IMR-90 (cell line): ENCODE measurements at regions of chr10 and their contacts with region 1.

Region 1: DNA sequence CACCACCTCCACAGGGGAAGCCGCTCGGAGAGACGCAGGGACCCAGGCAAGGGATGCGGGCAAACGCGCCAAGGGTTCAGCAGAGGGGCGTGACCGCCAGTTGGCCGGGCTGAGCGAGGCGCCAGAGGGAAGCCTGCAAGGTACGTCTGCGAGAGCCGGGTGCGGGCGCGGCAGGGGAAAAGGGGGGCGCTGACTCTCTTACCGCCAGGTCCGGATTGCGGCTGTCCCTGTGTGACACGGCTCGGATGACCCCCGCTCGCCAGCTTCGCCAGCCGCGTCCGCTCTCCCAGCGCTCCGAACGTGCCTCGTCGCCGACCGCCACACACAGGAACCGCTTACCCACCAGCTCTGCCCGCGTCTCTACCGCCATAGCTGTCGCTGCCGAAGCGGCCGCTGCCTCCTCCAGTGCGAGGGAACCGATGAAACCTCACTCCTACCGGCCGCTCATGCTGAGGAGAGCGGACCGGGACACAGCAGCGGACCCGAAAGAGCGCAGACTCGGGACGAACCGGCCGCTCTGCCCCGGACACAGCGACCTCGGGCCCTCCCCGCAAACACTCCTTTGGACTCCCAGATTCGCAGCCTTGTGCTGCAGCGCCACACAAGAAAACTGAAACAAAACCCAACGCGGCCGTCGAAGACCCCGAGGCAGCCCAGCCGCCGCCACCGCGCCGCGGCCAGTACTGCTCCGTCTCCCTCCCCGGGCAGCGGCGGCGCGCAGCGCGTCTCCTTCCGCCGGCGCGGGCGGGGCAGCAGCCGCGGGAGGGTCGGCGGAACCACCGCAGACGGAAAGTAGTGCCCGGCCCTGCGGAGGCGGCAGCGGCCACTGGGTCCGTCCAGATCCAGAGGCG is at the start of gene JMJD1C:
- DNase-seq: peak; percentile 84
- ATAC-seq: peak; percentile 84
- H3K4me3 ChIP-seq: peak within 1 kb of the TSS; percentile 90
- H3K27ac ChIP-seq: peak within 1 kb of the TSS; percentile 90
- H3K4me1 ChIP-seq: peaks cover 4% of the 10 kb centered on the region; the same call in 1 of the 2 replicates
- H3K27me3 ChIP-seq: no peaks in the 10 kb centered on the region
- CTCF ChIP-seq: no peak
- POLR2A ChIP-seq: peak; percentile 89
- RAD21 ChIP-seq: peak; percentile 30
- total RNA-seq, gene JMJD1C: 96.8 and 108 TPM in 2 replicates

Region 2: DNA sequence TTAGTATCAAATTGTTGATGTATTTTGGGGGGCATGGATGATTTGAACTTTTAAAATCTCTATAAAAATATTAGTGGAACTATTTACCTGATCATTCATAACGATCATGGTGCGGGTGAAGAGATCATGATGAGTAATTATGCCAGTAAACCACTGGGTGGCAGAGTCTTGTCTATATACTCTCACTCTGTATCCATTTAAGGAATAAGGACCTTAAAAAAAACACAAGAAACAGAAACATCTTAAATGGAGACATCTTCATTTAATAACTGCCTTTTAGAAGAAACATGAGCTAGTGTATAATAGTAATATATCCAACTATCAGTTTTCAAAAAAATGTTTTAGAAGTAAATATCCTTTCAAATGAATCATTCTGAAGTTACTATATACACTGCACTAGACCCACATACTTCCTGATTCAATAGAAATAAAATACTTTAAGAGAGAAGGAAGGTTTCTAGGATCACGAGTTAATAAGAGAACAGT is 248.4 kb before region 1 on chr10:
- CTCF ChIA-PET with region 1: no interaction called
- POLR2A ChIA-PET with region 1: no interaction called
- dilution Hi-C with region 1: no loop called
- in situ Hi-C with region 1: no loop called
- intact Hi-C with region 1: loop called (anchors 5 kb)
- DNase-seq: peak; percentile 77
- ATAC-seq: peak; percentile 95
- H3K4me3 ChIP-seq: no peak overlapping the region
- H3K27ac ChIP-seq: no peak overlapping the region
- H3K4me1 ChIP-seq: no peaks in the 10 kb centered on the region
- H3K27me3 ChIP-seq: no peaks in the 10 kb centered on the region
- CTCF ChIP-seq: peak; percentile 66
- POLR2A ChIP-seq: no peak
- RAD21 ChIP-seq: peak; percentile 65

Region 3: DNA sequence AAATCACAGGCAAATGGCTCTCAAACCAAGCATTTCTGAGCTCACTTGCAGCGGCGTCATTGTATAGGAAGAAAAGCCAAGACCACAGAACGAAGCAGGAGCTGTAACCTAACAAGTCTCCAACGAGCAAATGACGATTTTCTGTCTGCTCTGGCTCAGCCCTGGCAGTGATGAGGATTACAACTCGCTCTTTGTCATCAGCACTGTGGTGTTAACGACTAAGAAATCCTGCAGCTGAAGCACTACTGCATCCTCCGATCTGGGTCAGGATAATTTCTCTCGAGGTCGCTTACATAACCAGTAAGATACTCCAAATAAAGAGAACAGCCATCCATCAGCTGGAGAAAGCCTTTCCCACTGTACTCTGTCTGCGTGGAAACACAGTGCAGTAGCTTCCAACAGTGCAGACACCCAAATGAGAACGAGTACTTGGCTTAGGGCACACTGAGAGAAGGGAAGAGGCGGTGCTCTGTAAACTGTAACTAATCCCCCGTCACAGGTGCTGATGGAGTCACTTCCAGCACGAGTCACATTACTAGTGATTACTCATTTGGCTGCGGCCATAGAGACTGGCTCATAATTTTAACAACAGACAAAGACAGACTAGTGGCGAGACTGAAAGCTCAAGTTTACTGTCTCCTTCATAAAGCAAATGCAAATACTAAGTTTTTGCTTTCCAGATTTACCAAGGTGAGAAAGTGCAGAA is 196.6 kb before region 1 on chr10:
- CTCF ChIA-PET with region 1: no interaction called
- POLR2A ChIA-PET with region 1: interaction called, 3 read pairs
- dilution Hi-C with region 1: no loop called
- in situ Hi-C with region 1: no loop called
- intact Hi-C with region 1: loop called (anchors 2 kb)
- DNase-seq: peak; percentile 97
- ATAC-seq: peak; percentile 80
- H3K4me3 ChIP-seq: peak overlapping the region; percentile 55
- H3K27ac ChIP-seq: peak overlapping the region; percentile 87
- H3K4me1 ChIP-seq: peaks cover 4% of the 10 kb centered on the region
- H3K27me3 ChIP-seq: no peaks in the 10 kb centered on the region
- CTCF ChIP-seq: peak; percentile 17; the same call in 1 of the 2 replicates
- POLR2A ChIP-seq: peak; percentile 98
- RAD21 ChIP-seq: peak; percentile 8; the same call in 1 of the 2 replicates

Region 4: DNA sequence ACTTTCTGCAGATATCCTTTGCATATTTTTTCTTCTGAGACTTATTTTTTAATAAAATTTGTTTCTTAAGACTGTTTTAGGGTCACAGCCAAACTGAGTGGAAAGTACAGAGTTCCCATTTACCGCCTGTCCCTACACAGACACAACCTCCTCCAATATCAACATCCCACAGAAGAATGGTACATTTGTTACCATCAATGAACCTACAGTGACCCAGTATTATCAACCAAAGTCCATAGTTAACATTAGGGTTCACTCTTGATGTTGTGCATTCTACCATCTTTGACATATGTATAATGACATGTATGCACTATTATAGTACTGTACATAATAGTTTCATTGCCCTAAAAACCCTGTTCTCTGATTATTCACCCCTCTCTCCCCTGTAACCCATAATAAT is 41.0 kb after region 1 on chr10:
- CTCF ChIA-PET with region 1: no interaction called
- POLR2A ChIA-PET with region 1: no interaction called
- dilution Hi-C with region 1: no loop called
- in situ Hi-C with region 1: no loop called
- intact Hi-C with region 1: no loop called
- DNase-seq: no peak
- ATAC-seq: no peak
- H3K4me3 ChIP-seq: no peak overlapping the region
- H3K27ac ChIP-seq: no peak overlapping the region
- H3K4me1 ChIP-seq: 0 out of 2 replicates have a peak, but pooled peaks cover 3% of the 10 kb centered on the region
- H3K27me3 ChIP-seq: no peaks in the 10 kb centered on the region
- CTCF ChIP-seq: no peak
- POLR2A ChIP-seq: no peak
- RAD21 ChIP-seq: no peak

Region 5: GRCh38 chr10:63521416-63522276 is 56.1 kb after region 1 on chr10:
- CTCF ChIA-PET with region 1: no interaction called
- POLR2A ChIA-PET with region 1: no interaction called
- dilution Hi-C with region 1: no loop called
- in situ Hi-C with region 1: no loop called
- intact Hi-C with region 1: loop called (anchors 2 kb)
- DNase-seq: peak; percentile 75
- ATAC-seq: peak; percentile 87
- H3K4me3 ChIP-seq: peak overlapping the region; percentile 79
- H3K27ac ChIP-seq: peak overlapping the region; percentile 95
- H3K4me1 ChIP-seq: peaks cover 6% of the 10 kb centered on the region
- H3K27me3 ChIP-seq: no peaks in the 10 kb centered on the region
- CTCF ChIP-seq: no peak
- POLR2A ChIP-seq: peak; percentile 29; the same call in 1 of the 2 replicates
- RAD21 ChIP-seq: no peak

Region 6: GRCh38 chr10:63614371-63614891 is 148.9 kb after region 1 on chr10:
- CTCF ChIA-PET with region 1: no interaction called
- POLR2A ChIA-PET with region 1: no interaction called
- dilution Hi-C with region 1: no loop called
- in situ Hi-C with region 1: no loop called
- intact Hi-C with region 1: no loop called
- DNase-seq: peak; percentile 63
- ATAC-seq: peak; percentile 78
- H3K4me3 ChIP-seq: no peak overlapping the region
- H3K27ac ChIP-seq: peak overlapping the region; percentile 61; the same call in 1 of the 2 replicates
- H3K4me1 ChIP-seq: peaks cover 5% of the 10 kb centered on the region; the same call in 1 of the 2 replicates
- H3K27me3 ChIP-seq: no peaks in the 10 kb centered on the region
- CTCF ChIP-seq: no peak
- POLR2A ChIP-seq: no peak
- RAD21 ChIP-seq: no peak

Region 7: DNA sequence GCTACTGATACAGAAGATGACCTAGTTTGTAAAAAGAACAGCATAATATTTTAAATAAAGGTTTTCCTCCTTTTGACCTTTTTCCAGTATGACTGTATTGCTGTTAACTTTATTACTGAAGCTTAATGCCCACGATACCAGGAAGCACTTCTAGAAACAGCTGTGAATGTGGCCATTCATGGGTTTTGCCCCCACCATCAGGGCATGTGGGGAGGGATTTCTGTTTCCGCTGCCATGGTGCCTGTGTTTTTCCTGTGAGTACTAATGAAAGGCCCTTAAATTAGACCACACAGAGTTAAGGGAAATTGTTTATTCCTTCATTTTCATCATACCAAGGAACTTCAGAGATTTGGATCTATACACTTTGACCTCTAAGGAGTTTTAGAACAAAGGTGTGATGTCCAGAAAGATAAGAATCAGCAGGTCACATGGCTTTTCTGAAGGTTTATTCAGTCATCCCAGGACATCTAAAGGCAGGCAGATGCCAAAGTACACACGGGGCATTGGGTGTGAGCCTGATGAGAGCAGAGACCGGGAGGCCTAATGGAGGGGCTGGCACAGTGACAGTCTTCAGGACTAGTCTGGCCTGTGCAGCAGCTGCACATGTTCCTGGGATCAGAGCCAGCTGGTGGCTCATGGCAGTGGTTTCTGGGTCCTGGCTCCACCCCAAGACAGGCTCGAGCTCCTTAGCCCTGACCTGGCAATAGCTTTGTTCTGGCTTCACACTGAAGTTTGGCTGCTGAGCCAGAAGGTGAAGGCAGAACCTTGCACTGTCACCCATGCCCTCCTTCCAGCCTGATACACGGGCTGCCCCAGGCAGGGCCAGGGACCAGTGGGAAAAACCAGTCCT is 246.6 kb after region 1 on chr10:
- CTCF ChIA-PET with region 1: no interaction called
- POLR2A ChIA-PET with region 1: no interaction called
- dilution Hi-C with region 1: no loop called
- in situ Hi-C with region 1: loop called (anchors 10 kb)
- intact Hi-C with region 1: loop called (anchors 5 kb)
- DNase-seq: peak; percentile 97
- ATAC-seq: peak; percentile 79
- H3K4me3 ChIP-seq: no peak overlapping the region
- H3K27ac ChIP-seq: no peak overlapping the region
- H3K4me1 ChIP-seq: peaks cover 17% of the 10 kb centered on the region
- H3K27me3 ChIP-seq: no peaks in the 10 kb centered on the region
- CTCF ChIP-seq: no peak
- POLR2A ChIP-seq: no peak
- RAD21 ChIP-seq: no peak

Region 8: DNA sequence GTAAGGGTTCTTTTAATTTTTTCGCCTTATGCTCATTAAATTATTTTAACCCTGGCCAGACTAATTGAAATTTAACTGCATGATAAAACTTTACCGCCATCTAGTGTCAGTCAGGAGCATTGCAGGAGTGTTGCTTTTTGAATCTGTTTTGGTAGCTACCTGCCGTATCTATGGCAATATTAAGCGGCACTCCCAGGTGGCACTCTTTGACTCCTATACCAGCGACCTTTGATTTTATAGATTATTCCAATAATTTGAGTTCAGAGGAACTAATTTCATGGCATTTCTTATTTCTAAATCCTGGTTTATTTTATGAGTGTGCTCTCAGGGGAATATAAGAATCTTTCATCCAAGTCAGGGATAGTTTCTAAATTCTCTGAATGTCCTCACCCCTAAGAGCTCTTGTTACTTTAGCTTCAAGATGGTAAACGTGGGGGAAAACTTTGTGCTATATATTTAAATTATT is 254.6 kb after region 1 on chr10:
- CTCF ChIA-PET with region 1: interaction called, 3 read pairs
- POLR2A ChIA-PET with region 1: no interaction called
- dilution Hi-C with region 1: no loop called
- in situ Hi-C with region 1: loop called (anchors 10 kb)
- intact Hi-C with region 1: loop called (anchors 5 kb)
- DNase-seq: peak; percentile 45
- ATAC-seq: peak; percentile 69
- H3K4me3 ChIP-seq: no peak overlapping the region
- H3K27ac ChIP-seq: no peak overlapping the region
- H3K4me1 ChIP-seq: no peaks in the 10 kb centered on the region
- H3K27me3 ChIP-seq: peaks cover 7% of the 10 kb centered on the region
- CTCF ChIP-seq: peak; percentile 96
- POLR2A ChIP-seq: no peak
- RAD21 ChIP-seq: peak; percentile 93